Prostate gland (tissue), 2 donors: ENCODE measurements at regions of chr4 and their contacts with region 1.

Region 1: GRCh38 chr4:143513306-143514168 is at the start of gene SMARCA5:
- DNase-seq: peak; percentile 97
- H3K4me3 ChIP-seq: peak within 1 kb of the TSS; percentile 85 to 87
- H3K27ac ChIP-seq: peak within 1 kb of the TSS; percentile 93 to 98
- H3K4me1 ChIP-seq: no peaks in the 10 kb centered on the region
- H3K27me3 ChIP-seq: no peaks in the 10 kb centered on the region
- CTCF ChIP-seq: no peak
- POLR2A ChIP-seq: peak; percentile 87
- total RNA-seq, gene SMARCA5: 36.7 to 62.5 TPM

Region 2: DNA sequence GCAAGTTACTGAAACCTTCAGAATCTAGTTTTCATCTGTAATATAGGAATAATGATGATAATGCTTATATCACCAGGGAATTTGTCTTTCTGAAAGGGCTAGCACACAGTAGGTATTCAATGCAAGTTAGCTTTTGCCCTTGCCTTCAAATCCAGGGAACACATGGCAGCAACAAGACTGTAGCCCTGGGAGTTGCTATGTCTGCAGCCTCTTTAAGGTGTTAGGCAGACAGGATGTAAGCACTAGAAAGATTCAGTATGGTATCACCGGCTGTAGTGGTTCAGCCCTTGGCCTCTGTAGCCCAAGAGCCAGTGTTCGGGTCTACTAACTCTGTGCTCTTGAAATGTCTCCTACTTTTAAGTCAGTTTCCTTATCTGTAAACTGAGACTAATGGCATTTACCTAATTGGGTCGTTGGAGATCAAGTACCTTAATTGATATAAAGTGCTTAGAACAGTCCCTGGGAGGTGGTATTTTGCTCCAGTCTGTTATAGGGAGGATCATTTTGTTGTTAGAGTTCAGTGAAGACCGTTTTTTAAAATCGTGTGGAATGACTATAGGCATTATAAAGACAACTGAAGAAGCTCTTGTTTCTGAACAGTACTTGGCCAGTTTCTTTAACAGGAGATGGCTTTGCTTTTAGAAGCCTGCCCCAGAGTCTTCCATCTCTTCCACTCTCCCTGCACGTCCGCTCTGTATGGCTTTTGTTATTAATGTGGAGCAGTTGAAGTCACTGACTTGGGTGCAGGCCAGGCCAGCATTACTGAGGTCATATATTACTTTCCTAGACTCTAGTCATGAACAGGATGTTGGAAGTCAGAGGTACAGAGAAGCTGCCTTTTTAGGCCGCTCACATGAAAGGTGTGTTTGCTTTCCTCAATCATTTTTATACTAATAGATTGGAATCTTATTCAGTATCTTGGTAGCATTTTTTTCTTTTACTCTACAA is 132.1 kb before region 1 on chr4:
- intact Hi-C with region 1: loop called (anchors 10 kb)
- DNase-seq: peak; percentile 63
- H3K4me3 ChIP-seq: no peak overlapping the region
- H3K27ac ChIP-seq: peak overlapping the region; percentile 55 to 62
- H3K4me1 ChIP-seq: no peaks in the 10 kb centered on the region
- H3K27me3 ChIP-seq: no peaks in the 10 kb centered on the region
- CTCF ChIP-seq: no peak
- POLR2A ChIP-seq: no peak